Vagina (tissue), 2 donors: ENCODE measurements at regions of chr6 and their contacts with region 1.

Region 1: DNA sequence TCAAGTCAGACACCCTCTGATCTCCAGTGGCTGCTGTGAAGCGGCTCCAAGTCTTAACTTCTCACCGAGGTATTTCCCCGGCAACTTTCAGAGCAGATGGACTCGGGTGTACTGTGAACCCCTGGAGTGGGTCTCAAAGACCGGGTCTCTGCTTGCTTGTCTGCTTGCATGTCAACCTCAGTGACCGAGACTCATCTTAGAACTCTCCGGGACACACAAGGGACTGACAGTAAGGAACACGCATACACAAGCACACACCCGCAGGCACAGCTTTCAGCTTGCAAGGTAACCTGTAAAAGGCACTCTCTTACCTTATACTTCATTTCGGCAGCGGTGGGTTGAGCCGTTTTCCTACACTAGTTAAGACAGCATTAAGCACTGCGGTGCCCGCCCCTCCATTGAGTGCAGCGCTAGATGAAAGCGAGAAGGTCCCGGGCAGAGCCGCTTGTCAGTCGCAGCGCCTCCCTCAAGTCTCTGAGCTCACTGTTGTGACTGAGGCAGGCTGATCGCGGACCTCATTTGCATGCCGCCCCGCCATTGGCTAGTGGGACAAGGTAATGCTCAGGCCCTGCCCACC is at the start of gene NEDD9:
- DNase-seq: peak in 1 of 2 donors; percentile 99
- H3K4me3 ChIP-seq: peak within 1 kb of the TSS; percentile 45 to 56
- H3K27ac ChIP-seq: peak within 1 kb of the TSS; percentile 90
- H3K4me1 ChIP-seq: peaks cover 57% of the 10 kb centered on the region
- H3K27me3 ChIP-seq: no peaks in the 10 kb centered on the region
- CTCF ChIP-seq: no peak
- POLR2A ChIP-seq: peak; percentile 98 to 99
- total RNA-seq, gene NEDD9: 45.4 TPM

Region 2: DNA sequence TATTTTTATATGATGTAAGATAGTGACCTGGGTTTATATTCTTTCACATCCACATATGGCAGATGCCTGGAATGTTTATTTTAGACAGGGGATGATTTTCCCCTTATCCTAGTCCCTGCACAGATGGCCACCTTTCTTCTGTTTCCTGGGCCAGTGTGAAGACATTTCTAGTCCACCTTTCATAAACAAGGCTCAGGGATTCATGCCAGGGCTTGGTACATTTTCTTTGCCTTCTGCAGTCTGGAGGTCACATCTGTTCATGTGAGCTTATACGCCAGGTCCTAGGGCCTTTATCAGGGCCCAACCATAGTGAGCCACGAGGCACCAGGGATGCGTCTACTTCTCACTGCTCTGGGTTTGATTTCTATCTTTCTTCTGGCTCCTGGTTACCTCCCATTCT is 82.7 kb before region 1 on chr6:
- intact Hi-C with region 1: no loop called
- DNase-seq: no peak
- H3K4me3 ChIP-seq: no peak overlapping the region
- H3K27ac ChIP-seq: no peak overlapping the region
- H3K4me1 ChIP-seq: peaks cover 2% of the 10 kb centered on the region
- H3K27me3 ChIP-seq: no peaks in the 10 kb centered on the region
- CTCF ChIP-seq: no peak
- POLR2A ChIP-seq: no peak

Region 3: GRCh38 chr6:11366183-11366933 is 134.1 kb after region 1 on chr6:
- intact Hi-C with region 1: loop called (anchors 10 kb)
- DNase-seq: no peak
- H3K4me3 ChIP-seq: no peak overlapping the region
- H3K27ac ChIP-seq: peak overlapping the region; percentile 69
- H3K4me1 ChIP-seq: peaks cover 26% of the 10 kb centered on the region
- H3K27me3 ChIP-seq: no peaks in the 10 kb centered on the region
- CTCF ChIP-seq: no peak
- POLR2A ChIP-seq: no peak

Region 4: DNA sequence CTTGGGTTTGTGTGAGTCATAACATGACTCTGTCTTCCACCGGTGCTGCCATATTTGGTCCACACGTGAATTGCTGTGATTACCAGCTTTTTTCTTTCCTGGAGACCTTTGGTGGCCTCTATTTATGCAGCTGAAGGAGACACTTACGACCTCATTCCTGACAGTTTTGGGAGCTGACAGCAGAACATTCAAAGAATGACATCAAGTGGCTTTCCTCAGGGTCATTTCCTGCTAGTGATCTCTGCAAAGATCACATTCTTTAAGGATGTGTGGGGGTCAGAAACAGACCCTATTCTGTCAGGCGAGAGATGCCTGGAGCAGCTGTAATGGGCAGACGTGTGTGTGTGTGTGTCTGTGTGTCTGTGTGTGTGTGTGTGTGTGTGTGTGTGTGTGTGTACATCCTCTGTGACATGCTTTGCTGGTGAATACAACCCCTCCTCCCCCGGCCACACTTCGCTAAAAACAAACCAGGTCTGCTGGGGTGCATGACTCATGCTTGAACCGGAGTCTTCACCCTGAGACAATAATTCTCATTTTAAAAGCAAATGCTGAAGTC is 420.8 kb after region 1 on chr6:
- intact Hi-C with region 1: no loop called
- DNase-seq: no peak
- H3K4me3 ChIP-seq: no peak overlapping the region
- H3K27ac ChIP-seq: no peak overlapping the region
- H3K4me1 ChIP-seq: peaks cover 17% of the 10 kb centered on the region
- H3K27me3 ChIP-seq: no peaks in the 10 kb centered on the region
- CTCF ChIP-seq: no peak
- POLR2A ChIP-seq: no peak